Activated T-helper 1 cell treated with anti-CD3 and anti-CD28 coated beads, Interleukin-12 subunit alpha, Interleukin-12 subunit beta, Interleukin-2, Interleukin-4 antibody, amounts not matched to agents 30 ng/mL and 10 ng/mL and 1 ng/mL, durations not matched to agents 14 hours and 24 hours and 36 hours (primary cell): ENCODE measurements at regions of chr12 and their contacts with region 1.

Region 1: GRCh38 chr12:94133964-94134795 is 14.2 kb upstream of the PLXNC1 start:
- DNase-seq: peak; percentile 24
- H3K4me3 Mint-ChIP-seq: no peak overlapping the region
- H3K27ac Mint-ChIP-seq: no peak overlapping the region
- H3K4me1 Mint-ChIP-seq: peaks cover 6% of the 10 kb centered on the region
- H3K27me3 Mint-ChIP-seq: peaks cover 10% of the 10 kb centered on the region

Region 2: DNA sequence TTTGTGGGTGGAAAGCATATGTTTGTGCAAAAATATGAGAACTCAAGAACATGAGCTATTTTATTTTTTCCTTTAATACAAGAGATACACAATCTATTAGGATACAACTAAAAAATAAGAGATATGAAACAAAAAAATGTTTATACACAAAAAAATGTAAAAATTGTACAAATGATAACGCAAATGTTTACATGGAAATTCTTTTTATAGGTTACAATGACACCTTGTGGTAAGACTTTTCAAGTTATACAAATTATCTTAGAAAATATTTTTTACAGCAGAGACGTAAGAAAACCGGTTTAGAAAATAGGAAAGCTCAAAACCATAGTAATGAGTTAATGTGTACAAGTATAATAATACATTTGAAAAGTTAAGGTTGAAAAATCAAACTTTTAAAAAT is 300.0 kb after region 1 on chr12:
- intact Hi-C with region 1: loop called (anchors 1 kb)
- DNase-seq: no peak
- H3K4me3 Mint-ChIP-seq: no peak overlapping the region
- H3K27ac Mint-ChIP-seq: no peak overlapping the region
- H3K4me1 Mint-ChIP-seq: peaks cover 26% of the 10 kb centered on the region
- H3K27me3 Mint-ChIP-seq: no peaks in the 10 kb centered on the region